ENCODE measurements at regions of chr13 and their contacts with region 1.

Region 1: GRCh38 chr13:33931397-33932311 is 113.7 kb downstream of the RFC3 start:
- DNase-seq: peak in 1 of 9 experiments; percentile 7
- ATAC-seq: no peak
- H3K4me3 ChIP-seq: no peak overlapping the region
- H3K4me3 Mint-ChIP-seq: no peak overlapping the region
- H3K27ac ChIP-seq: no peak overlapping the region
- H3K27ac Mint-ChIP-seq: no peak overlapping the region
- H3K4me1 ChIP-seq: no peaks in the 10 kb centered on the region
- H3K4me1 Mint-ChIP-seq: no peaks in the 10 kb centered on the region
- H3K27me3 ChIP-seq: no peaks in the 10 kb centered on the region
- H3K27me3 Mint-ChIP-seq: no peaks in the 10 kb centered on the region
- CTCF ChIP-seq: no peak

Region 2: DNA sequence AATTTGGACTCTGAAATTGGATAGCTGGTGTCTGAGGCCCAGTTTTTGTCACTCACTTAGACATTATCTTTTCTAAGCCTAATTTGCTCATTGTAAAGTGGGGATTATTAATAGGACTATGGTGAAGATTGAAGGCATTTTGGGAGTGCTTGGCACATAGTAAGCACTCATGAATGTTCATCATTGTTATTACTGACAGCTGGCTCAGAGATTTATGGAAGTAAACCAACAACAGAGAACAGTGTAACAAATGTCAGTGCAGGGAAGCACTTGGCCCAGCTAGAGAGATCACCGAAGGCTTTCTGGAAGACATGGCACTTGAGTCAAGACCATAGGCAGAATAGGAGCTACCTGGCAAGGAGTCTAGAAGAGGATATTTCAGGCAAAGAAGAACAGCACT is 21.4 kb before region 1 on chr13:
- CTCF ChIA-PET with region 1: no interaction called
- POLR2A ChIA-PET with region 1: no interaction called
- intact Hi-C with region 1: no loop called
- DNase-seq: no peak
- ATAC-seq: no peak
- H3K4me3 ChIP-seq: no peak overlapping the region
- H3K4me3 Mint-ChIP-seq: no peak overlapping the region
- H3K27ac ChIP-seq: no peak overlapping the region
- H3K27ac Mint-ChIP-seq: no peak overlapping the region
- H3K4me1 ChIP-seq: no peaks in the 10 kb centered on the region
- H3K4me1 Mint-ChIP-seq: no peaks in the 10 kb centered on the region
- H3K27me3 ChIP-seq: no peaks in the 10 kb centered on the region
- H3K27me3 Mint-ChIP-seq: no peaks in the 10 kb centered on the region
- CTCF ChIP-seq: no peak

Region 3: DNA sequence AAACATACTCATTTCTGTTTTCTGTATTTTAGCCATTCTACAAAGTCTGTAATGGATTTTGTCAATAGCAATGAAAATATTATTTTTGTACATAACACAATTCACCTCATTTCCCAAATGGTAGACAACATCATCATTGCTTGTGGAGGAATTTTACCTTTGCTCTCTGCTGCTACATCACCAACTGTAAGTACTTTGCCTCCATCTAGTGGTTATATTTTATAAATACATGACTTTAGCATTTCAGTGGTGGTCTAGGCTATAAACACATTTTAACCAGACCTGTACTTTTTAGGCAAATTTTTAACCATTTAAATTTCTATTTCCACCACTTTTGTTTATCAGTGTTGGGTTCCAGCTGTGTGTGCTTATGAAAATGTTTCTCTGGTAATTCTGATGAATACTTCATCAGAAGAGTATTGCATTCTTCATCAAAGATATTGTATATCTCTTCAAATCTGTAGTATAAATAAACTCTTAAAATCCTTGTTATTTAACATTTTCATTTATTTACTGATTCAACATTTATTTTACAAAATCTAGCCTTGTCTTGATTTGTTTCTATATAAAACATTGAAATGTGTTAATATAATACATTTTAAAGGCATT is 1232.8 kb after region 1 on chr13:
- CTCF ChIA-PET with region 1: no interaction called
- POLR2A ChIA-PET with region 1: no interaction called
- intact Hi-C with region 1: loop called (anchors 2 to 5 kb)
- DNase-seq: peak in 2 of 9 experiments; percentile 12 to 40
- ATAC-seq: peak; percentile 51
- H3K4me3 ChIP-seq: no peak overlapping the region
- H3K4me3 Mint-ChIP-seq: no peak overlapping the region
- H3K27ac ChIP-seq: no peak overlapping the region
- H3K27ac Mint-ChIP-seq: no peak overlapping the region
- H3K4me1 ChIP-seq: no peaks in the 10 kb centered on the region
- H3K4me1 Mint-ChIP-seq: peaks cover 7% of the 10 kb centered on the region
- H3K27me3 ChIP-seq: no peaks in the 10 kb centered on the region
- H3K27me3 Mint-ChIP-seq: no peaks in the 10 kb centered on the region
- CTCF ChIP-seq: peak; percentile 71

Measured in CD8-positive, alpha-beta T cell (primary cell).